Activated CD4-positive, alpha-beta T cell treated with anti-CD3 and anti-CD28 coated beads, Interleukin-2, amount 10 ng/mL, durations not matched to agents 24 days and 14 days (primary cell): ENCODE measurements at regions of chr3 and their contacts with region 1.

Region 1: DNA sequence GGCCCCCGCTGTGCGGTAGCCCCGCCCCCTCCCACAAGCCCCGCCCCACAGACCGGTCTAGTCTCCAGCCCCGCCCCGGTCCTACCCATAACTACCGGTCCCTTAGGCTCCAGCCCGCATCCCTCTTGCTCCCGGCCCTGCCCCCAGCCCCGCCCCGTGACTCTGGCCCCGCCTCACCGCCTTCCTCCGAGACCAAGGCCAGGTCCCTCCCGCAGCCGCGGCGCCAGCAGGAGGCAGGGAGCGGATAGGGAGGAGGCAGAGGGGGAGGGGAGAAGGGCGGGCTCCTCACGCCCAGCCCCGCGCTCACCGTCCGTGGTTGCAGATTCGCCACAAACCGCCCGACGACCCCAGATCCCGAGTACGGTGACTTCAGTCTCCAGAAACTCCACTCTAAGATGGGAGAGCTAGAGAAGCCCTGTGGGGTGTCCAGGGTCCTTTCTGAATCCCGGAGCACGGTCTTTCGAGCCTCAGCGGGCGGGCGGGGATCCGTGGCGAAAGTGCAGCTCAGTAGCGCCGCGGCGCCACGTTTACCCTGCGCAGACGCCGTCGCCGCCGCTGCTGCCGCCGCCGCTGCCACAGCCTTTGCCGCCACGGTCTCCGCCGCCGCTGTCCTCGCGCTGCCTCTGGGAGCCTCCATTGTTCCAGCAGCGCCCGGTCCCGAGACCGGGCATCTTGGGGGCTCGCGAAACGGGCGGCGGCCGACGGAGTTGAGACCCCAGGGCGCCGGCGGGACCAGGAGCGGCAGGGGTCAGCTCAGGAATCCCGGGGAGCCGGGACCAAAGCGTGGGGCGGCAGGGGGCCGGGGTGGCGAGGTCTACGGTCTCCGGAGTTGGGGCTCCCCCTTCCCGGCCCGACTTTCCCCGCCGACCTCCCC is at the start of gene BRPF1:
- DNase-seq: peak; percentile 98
- H3K4me3 Mint-ChIP-seq: peak within 1 kb of the TSS; percentile 87
- H3K27ac Mint-ChIP-seq: peak within 1 kb of the TSS; percentile 95
- H3K4me1 Mint-ChIP-seq: peaks cover 65% of the 10 kb centered on the region
- H3K27me3 Mint-ChIP-seq: no peaks in the 10 kb centered on the region
- total RNA-seq, gene BRPF1: 41.7 and 45.3 TPM in 2 replicates

Region 2: GRCh38 chr3:9352917-9353752 is 378.3 kb before region 1 on chr3:
- intact Hi-C with region 1: loop called (anchors 5 kb)
- DNase-seq: peak; percentile 87
- H3K4me3 Mint-ChIP-seq: no peak overlapping the region
- H3K27ac Mint-ChIP-seq: no peak overlapping the region
- H3K4me1 Mint-ChIP-seq: peaks cover 15% of the 10 kb centered on the region
- H3K27me3 Mint-ChIP-seq: no peaks in the 10 kb centered on the region

Region 3: GRCh38 chr3:9362731-9363530 is 368.5 kb before region 1 on chr3 and contains the start of gene THUMPD3:
- intact Hi-C with region 1: loop called (anchors 2 kb)
- DNase-seq: peak; percentile 98
- H3K4me3 Mint-ChIP-seq: peak within 1 kb of the TSS; percentile 92
- H3K27ac Mint-ChIP-seq: peak within 1 kb of the TSS; percentile 99
- H3K4me1 Mint-ChIP-seq: peaks cover 19% of the 10 kb centered on the region
- H3K27me3 Mint-ChIP-seq: peaks cover 3% of the 10 kb centered on the region
- total RNA-seq, gene THUMPD3: 58.6 and 64.2 TPM in 2 replicates

Region 4: GRCh38 chr3:9503283-9503682 is 228.2 kb before region 1 on chr3:
- intact Hi-C with region 1: loop called (anchors 5 kb)
- DNase-seq: peak; percentile 92
- H3K4me3 Mint-ChIP-seq: no peak overlapping the region
- H3K27ac Mint-ChIP-seq: no peak overlapping the region
- H3K4me1 Mint-ChIP-seq: peaks cover 7% of the 10 kb centered on the region
- H3K27me3 Mint-ChIP-seq: peaks cover 32% of the 10 kb centered on the region

Region 5: DNA sequence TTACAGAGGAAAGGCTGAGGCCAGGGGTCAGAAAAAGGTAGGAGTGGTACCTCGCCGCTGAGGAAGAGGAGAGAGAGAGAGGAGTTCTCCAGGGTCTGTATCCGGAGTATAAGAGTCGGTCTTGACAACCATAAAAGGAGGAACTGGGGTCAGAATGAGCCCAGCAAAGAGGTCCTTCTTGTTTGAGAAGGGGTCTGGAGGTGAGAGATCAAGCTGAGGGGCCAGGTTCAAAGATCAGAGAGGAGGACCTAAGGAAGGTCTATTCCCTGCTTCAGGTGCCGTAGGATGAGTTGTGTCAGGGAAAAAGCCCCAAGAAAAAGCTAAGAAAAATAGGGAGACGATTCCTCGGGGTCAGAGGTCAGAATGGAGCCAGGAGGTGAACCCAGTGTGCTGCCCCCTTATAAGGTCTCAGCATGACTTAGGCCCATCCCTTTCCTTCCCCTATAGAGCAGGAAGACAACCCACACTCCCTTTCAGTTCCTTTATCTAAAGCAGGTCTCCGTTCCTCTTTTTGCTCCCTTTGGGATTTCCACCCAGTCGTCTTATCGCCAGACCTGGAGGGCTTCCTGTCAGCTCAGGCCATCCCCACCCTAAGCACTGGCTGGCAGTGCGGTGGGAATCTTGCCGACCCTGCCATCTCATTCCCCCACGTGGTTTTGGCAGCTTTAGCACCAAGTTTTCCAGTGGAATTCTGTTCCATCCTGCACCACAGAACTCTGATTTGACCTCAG is 81.5 kb before region 1 on chr3:
- intact Hi-C with region 1: loop called (anchors 1 kb)
- DNase-seq: peak; percentile 71
- H3K4me3 Mint-ChIP-seq: peak overlapping the region; percentile 99
- H3K27ac Mint-ChIP-seq: peak overlapping the region; percentile 92
- H3K4me1 Mint-ChIP-seq: peaks cover 17% of the 10 kb centered on the region
- H3K27me3 Mint-ChIP-seq: peaks cover 2% of the 10 kb centered on the region

Region 6: DNA sequence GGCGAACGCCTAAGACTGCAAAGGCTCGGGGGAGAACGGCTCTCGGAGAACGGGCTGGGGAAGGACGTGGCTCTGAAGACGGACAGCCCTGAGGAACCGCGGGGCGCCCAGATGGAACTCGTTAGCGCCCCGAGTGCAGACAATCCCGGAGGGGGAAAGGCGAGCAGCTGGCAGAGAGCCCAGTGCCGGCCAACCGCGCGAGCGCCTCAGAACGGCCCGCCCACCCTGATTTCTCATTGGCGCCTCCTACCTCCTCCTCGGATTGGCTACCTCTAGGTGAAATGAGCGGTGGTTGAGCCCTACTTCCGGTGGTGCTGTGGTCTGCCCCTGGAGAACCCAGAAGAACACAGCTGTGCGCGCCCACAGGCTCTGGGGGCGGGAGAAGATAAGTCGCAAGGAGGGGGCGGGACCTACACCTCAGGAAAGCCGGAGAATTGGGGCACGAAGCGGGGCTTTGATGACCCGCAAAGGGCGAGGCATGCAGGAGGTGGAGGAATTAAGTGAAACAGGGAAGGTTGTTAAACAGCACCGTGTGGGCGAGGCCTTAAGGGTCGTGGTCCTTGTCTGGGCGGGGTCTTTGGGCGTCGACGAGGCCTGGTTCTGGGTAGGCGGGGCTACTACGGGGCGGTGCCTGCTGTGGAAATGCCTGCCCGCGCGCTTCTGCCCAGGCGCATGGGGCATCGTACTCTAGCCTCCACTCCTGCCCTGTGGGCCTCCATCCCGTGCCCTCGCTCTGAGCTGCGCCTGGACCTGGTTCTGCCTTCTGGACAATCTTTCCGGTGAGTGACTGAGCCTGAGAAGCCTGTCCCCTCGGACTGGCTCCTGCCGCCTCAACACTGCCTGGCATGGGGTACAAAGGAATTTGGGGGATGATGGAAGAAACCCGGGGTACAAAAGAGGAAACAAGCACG is 18.5 kb after region 1 on chr3 and contains the start of gene OGG1:
- intact Hi-C with region 1: loop called (anchors 1 kb)
- DNase-seq: peak; percentile 99
- H3K4me3 Mint-ChIP-seq: peak within 1 kb of the TSS; percentile 91
- H3K27ac Mint-ChIP-seq: peak within 1 kb of the TSS; percentile 96
- H3K4me1 Mint-ChIP-seq: peaks cover 50% of the 10 kb centered on the region
- H3K27me3 Mint-ChIP-seq: no peaks in the 10 kb centered on the region
- total RNA-seq, gene OGG1: 37.0 and 41.1 TPM in 2 replicates

Region 7: GRCh38 chr3:9769426-9770275 is 38.2 kb after region 1 on chr3 and contains the start of gene CAMK1:
- intact Hi-C with region 1: loop called (anchors 2 kb)
- DNase-seq: peak; percentile 93
- H3K4me3 Mint-ChIP-seq: peak within 1 kb of the TSS; percentile 82
- H3K27ac Mint-ChIP-seq: peak within 1 kb of the TSS; percentile 80
- H3K4me1 Mint-ChIP-seq: peaks cover 43% of the 10 kb centered on the region
- H3K27me3 Mint-ChIP-seq: no peaks in the 10 kb centered on the region
- total RNA-seq, gene CAMK1: 81.0 and 83.7 TPM in 2 replicates